OCI-LY7 (cell line): ENCODE measurements at regions of chr11 and their contacts with region 1.

Region 1: GRCh38 chr11:14789879-14790484 is 102.0 kb downstream of the CYP2R1 start:
- DNase-seq: peak; percentile 31
- H3K4me3 ChIP-seq: no peak overlapping the region
- H3K27ac ChIP-seq: no peak overlapping the region
- H3K4me1 ChIP-seq: no peaks in the 10 kb centered on the region
- CTCF ChIP-seq: peak; percentile 79

Region 2: DNA sequence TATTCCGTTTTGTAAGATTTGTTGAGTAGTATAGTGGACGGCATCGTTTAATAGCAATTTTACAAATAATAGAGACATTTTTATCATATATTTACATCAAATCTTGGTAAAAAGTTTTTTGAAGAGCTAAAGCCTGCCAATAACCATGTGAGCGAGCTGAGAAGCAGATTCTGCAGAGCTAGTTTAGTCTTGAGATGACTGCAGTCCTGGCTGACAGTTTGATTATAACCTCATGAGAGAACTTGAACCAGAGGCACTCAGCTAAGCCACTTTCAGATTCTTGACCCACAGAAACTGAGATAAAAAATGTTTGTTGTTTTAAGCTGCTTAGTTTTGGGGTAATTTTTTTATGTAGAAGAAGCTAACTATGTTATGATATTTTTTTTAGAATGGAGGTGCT is 67.5 kb before region 1 on chr11:
- CTCF ChIA-PET with region 1: no interaction called
- POLR2A ChIA-PET with region 1: no interaction called
- intact Hi-C with region 1: no loop called
- DNase-seq: no peak
- H3K4me3 ChIP-seq: no peak overlapping the region
- H3K27ac ChIP-seq: no peak overlapping the region
- H3K4me1 ChIP-seq: no peaks in the 10 kb centered on the region
- CTCF ChIP-seq: no peak

Region 3: GRCh38 chr11:15006139-15006759 is 216.3 kb after region 1 on chr11:
- CTCF ChIA-PET with region 1: no interaction called
- POLR2A ChIA-PET with region 1: no interaction called
- intact Hi-C with region 1: loop called (anchors 5 kb)
- DNase-seq: peak; percentile 59
- H3K4me3 ChIP-seq: no peak overlapping the region
- H3K27ac ChIP-seq: no peak overlapping the region
- H3K4me1 ChIP-seq: no peaks in the 10 kb centered on the region
- CTCF ChIP-seq: peak; percentile 85

Region 4: DNA sequence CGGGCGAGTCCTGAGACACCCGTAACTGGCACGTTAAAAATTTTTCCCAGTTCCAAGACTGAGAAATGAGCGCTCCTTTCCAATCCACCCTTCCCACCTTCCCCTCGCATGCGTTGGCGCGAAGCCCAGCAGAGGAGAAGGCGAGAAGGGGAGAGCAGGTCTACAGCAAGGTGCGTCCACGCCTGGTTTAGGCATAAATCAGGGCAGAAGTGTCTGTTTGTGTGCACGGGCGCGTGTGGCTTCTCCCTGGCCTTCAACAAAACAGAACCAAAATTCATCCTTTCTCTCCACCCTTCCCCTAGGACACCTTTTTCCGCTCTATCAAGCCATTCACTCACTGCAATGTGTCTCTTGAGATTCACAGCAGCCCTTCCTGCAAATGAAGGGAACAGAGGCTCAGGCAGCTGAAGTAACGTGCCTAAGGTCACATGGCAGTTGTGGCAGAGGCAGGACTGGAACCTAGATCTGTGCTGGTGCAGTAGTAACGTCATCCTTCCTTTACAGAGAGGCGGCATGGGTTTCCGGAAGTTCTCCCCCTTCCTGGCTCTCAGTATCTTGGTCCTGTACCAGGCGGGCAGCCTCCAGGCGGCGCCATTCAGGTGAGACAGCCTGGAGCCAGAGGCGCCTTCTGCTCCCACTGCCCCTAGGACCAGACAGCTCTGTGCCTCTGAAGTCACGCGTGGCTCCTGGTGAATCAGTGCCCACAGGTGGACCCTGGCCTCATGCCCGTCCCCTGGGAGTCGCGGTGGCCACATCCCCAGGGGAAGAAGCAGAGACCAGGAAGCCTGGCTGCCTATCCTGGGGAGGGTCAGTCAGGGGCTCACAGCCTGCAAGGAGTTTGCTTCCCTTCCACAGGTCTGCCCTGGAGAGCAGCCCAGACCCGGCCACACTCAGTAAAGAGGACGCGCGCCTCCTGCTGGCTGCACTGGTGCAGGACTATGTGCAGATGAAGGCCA is 284.5 kb after region 1 on chr11:
- CTCF ChIA-PET with region 1: no interaction called
- POLR2A ChIA-PET with region 1: no interaction called
- intact Hi-C with region 1: loop called (anchors 10 kb)
- DNase-seq: peak; percentile 59
- H3K4me3 ChIP-seq: no peak overlapping the region
- H3K27ac ChIP-seq: no peak overlapping the region
- H3K4me1 ChIP-seq: no peaks in the 10 kb centered on the region
- CTCF ChIP-seq: peak; percentile 76

Region 5: DNA sequence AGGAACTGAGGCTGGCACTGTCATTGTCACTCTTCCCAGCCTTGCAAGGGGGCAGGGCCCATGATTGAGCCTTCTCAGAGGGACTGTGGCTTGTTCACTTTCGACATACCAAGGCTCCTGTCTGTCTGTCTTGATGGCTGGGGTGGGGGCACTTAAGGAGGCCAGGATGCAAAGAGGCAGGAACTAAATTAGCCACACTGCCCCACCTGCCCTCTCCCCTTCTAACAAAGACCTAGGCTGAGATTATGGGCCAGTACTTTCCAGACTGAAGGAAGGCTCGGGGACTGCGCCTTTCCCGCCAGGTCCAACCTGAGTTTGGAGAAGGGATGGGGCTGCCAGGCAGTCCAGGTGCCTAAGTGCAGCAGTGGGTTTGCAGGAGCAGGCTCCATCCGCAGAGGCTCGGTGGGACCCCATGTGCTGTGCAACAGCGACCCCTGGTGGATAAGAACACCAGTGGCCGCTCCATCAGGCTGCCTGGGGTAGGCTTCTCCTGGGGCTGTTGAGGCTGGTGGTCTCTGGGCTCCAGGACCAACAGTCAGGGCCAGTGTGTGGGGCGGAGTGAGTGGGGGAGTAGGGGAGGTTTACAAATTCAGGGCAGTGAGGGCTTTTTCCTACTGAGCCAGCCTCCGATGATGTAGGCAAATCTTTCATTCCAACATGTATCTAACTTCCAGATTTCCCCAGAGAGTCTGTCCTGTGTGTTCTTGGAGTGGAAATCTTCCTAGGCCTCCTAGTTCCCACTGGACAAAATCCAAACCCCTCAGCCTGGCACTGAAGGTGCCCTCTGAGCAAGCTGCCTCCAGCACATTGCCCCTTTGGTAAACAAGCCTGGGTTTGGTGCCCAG is 418.6 kb after region 1 on chr11:
- CTCF ChIA-PET with region 1: no interaction called
- POLR2A ChIA-PET with region 1: no interaction called
- intact Hi-C with region 1: loop called (anchors 2 kb)
- DNase-seq: peak; percentile 74
- H3K4me3 ChIP-seq: no peak overlapping the region
- H3K27ac ChIP-seq: no peak overlapping the region
- H3K4me1 ChIP-seq: no peaks in the 10 kb centered on the region
- CTCF ChIP-seq: peak; percentile 87